ENCODE measurements at regions of chr2 and their contacts with region 1.

Region 1: DNA sequence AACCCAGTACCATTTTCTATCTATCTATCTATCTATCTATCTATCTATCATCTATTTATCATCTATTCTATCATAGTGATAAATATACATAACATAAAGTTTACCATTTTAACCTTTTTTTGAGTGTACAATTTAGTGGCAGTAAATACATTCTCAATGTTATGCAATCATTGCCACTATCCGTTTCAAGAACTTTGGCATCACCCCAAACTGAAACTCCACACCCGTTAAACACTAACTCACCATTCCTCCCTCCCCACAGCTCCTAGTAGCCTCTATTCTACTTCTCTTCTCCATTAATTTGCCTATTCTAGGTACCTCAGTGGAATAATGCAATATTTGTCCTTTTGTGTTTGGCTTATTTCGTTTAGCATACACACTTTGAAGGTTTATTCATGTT is 82.5 kb upstream of the KCNE4 start:
- DNase-seq: no peak
- ATAC-seq: no peak
- H3K4me3 ChIP-seq: no peak overlapping the region
- H3K27ac ChIP-seq: no peak overlapping the region
- H3K4me1 ChIP-seq: peaks cover 6 to 26% of the 10 kb centered on the region in 2 experiments; a peak in 2 of 4 replicates
- H3K27me3 ChIP-seq: no peaks in the 10 kb centered on the region
- CTCF ChIP-seq: no peak
- POLR2A ChIP-seq: no peak
- RAD21 ChIP-seq: no peak

Region 2: DNA sequence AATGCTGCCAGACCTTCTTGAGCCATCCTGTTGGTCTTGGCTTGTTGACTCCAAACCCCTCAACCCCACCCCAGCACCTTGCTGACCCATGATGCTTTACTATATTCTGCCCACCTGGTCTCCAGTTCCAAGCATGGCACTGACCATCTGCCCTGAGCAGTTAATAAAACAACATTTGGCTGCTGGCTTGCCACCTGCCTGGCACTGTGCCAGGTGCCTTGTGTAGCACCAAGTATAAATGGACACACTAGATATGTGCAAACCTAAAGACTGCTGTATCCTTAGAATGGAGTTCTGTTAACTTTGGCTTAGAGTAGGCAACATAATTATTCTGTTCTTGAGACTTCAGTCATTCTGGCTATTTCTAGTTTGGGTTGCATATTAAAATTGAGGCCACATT is 17.3 kb before region 1 on chr2:
- CTCF ChIA-PET with region 1: no interaction called
- POLR2A ChIA-PET with region 1: no interaction called
- RAD21 ChIA-PET with region 1: no interaction called
- intact Hi-C with region 1: no loop called
- DNase-seq: no peak
- ATAC-seq: no peak
- H3K4me3 ChIP-seq: no peak overlapping the region
- H3K27ac ChIP-seq: no peak overlapping the region
- H3K4me1 ChIP-seq: no peaks in the 10 kb centered on the region
- H3K27me3 ChIP-seq: no peaks in the 10 kb centered on the region
- CTCF ChIP-seq: no peak
- POLR2A ChIP-seq: no peak
- RAD21 ChIP-seq: no peak

Region 3: GRCh38 chr2:223101340-223102039 is 132.0 kb after region 1 on chr2:
- CTCF ChIA-PET with region 1: interaction called, 23 read pairs
- POLR2A ChIA-PET with region 1: interaction called, 3 read pairs
- RAD21 ChIA-PET with region 1: interaction called in 1 of 2 experiments, 3 read pairs
- intact Hi-C with region 1: loop called (anchors 1 kb)
- DNase-seq: peak; percentile 73
- ATAC-seq: peak; percentile 97
- H3K4me3 ChIP-seq: no peak overlapping the region
- H3K27ac ChIP-seq: no peak overlapping the region; the same call in 1 of the 2 replicates
- H3K4me1 ChIP-seq: peaks cover 8 to 15% of the 10 kb centered on the region in 2 experiments; a peak in 3 of 4 replicates
- H3K27me3 ChIP-seq: no peaks in the 10 kb centered on the region
- CTCF ChIP-seq: peak; percentile 69 to 75 (median 70)
- POLR2A ChIP-seq: no peak
- RAD21 ChIP-seq: peak; percentile 85

Region 4: DNA sequence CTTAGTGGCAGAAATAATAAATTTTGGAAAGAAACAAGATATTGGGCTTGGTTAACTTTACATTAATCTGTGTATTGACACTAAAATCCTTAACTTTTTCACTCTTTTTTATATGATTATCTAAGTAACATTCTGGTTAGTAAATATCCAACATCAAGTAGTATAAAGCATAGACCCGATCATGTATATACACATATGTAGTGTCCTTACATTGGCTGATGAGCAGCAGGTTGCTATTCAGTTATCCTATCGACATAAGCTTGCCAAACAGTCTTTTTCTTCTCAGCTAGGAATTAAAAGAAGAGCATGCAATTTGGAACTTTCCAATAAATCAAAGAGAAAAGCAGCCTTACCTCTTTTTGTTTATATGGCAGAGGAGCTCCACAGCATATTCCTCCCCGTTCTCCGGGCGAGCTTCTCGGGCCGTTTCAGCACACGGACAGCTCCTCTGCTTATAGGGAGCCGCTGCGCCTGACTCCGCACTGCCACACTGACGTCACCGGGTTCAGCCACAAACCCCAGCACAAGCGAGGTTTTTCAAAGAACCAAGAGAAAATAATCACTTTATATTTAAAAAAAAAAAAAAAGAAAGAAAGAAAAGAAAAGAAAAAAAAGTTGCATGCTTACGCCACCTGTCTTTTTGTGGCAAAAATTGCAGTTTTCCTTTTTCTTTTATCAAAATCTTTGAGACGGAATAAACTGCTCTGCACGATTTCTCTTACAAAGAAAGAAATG is 632.6 kb after region 1 on chr2 and contains the start of gene SCG2:
- CTCF ChIA-PET with region 1: no interaction called
- POLR2A ChIA-PET with region 1: no interaction called
- RAD21 ChIA-PET with region 1: no interaction called
- intact Hi-C with region 1: loop called (anchors 1 kb)
- DNase-seq: peak; percentile 59
- ATAC-seq: peak; percentile 100
- H3K4me3 ChIP-seq: peak within 1 kb of the TSS; percentile 19 to 46
- H3K27ac ChIP-seq: no peak within 1 kb of the TSS
- H3K4me1 ChIP-seq: peaks cover 5 to 26% of the 10 kb centered on the region in 2 experiments; a peak in 3 of 4 replicates
- H3K27me3 ChIP-seq: no peaks in the 10 kb centered on the region
- CTCF ChIP-seq: peak; percentile 13 to 27 (median 20); a peak in 2 of 6 replicates
- POLR2A ChIP-seq: no peak
- RAD21 ChIP-seq: peak; percentile 52; the same call in 1 of the 2 replicates
- total RNA-seq, gene SCG2: 19.8 TPM

Measured in HCT116 (cell line).